Esophagus muscularis mucosa (tissue), 4 donors: ENCODE measurements at regions of chr1 and their contacts with region 1.

Region 1: DNA sequence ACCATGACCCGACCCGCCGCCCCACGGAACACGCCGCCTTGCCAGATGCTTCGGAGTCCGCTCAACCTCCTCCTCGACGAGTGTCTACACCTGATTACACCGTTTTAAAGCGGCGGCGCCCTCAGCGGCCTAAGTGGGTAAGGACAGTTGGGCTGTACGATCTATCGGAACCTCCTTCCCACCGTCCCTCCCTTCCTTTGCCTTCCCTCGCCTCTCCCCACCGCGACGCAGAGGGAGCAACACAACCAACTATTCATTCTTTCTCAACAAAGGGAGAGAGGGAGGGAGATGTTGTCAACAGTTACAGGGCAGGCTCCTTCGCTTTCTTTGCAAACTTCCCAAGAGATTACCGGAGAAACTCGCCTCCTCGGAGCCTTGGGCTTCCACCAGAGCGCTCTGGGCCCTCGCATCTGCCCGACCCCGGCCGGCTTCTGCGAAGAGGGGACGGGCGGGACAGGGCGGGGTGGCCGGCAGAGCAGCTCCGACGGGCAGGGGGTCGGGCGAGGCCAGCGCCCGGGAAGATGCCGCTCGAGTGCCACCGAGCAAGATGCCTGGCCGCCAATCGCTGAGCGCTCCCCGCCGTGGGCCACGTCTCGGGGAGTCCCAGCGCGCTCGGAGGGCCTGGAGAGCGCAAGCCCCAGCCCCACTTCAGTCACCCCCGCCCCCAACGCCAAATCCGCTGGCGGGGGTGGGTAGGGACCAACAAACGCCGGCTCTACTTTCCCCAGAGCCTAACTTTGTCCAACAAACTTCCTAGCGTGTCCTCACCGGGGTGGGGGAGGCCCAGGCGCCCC is 683 bp downstream of the BCAR3 start:
- DNase-seq: peak; percentile 95
- H3K4me3 ChIP-seq: peak overlapping the region; percentile 79 to 94 (median 88)
- H3K27ac ChIP-seq: peak overlapping the region; percentile 86 to 94 (median 92)
- H3K4me1 ChIP-seq: peaks cover 28 to 51% (median 43%) of the 10 kb centered on the region in 4 donors
- H3K27me3 ChIP-seq: no peaks in the 10 kb centered on the region
- CTCF ChIP-seq: peak; percentile 49 to 78 (median 55)
- EP300 ChIP-seq: no peak
- POLR2A ChIP-seq: no peak

Region 2: GRCh38 chr1:93623875-93624274 is 57.1 kb before region 1 on chr1:
- intact Hi-C with region 1: no loop called
- DNase-seq: no peak
- H3K4me3 ChIP-seq: no peak overlapping the region
- H3K27ac ChIP-seq: no peak overlapping the region
- H3K4me1 ChIP-seq: peaks cover 14 to 32% (median 21%) of the 10 kb centered on the region in 4 donors
- H3K27me3 ChIP-seq: no peaks in the 10 kb centered on the region
- CTCF ChIP-seq: no peak
- EP300 ChIP-seq: no peak
- POLR2A ChIP-seq: no peak

Region 3: DNA sequence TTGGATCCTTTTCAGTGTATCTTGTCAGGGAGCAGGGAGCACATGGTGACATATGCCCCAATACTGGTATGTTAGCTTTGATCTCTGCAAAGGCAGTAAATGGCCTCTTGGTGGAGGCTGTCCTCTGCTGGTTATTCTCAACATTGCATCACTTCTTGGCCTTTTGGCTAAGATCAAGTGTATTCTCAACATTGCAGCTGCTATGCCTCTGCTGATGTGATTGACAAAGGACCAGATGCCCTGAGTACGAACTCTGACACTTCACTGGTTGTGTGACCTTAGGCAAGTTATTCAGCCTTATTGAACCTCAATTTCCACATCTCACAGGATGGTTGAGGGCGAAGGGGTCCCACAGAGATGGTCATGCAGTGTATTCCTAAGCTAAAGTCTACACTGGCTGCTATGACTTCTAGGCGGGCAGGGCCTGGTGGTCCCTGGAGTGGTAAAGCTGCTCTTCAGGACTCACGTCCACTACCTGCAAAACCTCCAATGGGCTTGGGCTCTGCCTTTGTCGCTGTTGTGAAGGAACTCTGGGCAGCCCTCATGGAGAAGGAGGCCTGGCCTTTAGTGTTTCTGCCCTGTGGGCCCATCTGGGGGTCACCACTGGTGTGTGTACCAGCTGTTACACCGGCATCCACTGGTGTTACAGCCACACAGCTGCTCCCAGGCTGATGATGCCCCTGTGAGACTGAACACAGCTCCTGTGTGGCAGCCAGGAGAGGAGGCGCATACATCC is 133.3 kb after region 1 on chr1:
- intact Hi-C with region 1: loop called (anchors 5 kb)
- DNase-seq: peak; percentile 60
- H3K4me3 ChIP-seq: no peak overlapping the region
- H3K27ac ChIP-seq: no peak overlapping the region
- H3K4me1 ChIP-seq: peaks cover 8 to 35% (median 15%) of the 10 kb centered on the region in 4 donors
- H3K27me3 ChIP-seq: no peaks in the 10 kb centered on the region
- CTCF ChIP-seq: peak; percentile 92 to 99 (median 93)
- EP300 ChIP-seq: no peak
- POLR2A ChIP-seq: no peak

Region 4: GRCh38 chr1:93827633-93828366 is 146.8 kb after region 1 on chr1:
- intact Hi-C with region 1: no loop called
- DNase-seq: peak; percentile 29
- H3K4me3 ChIP-seq: no peak overlapping the region
- H3K27ac ChIP-seq: no peak overlapping the region
- H3K4me1 ChIP-seq: no peaks in the 10 kb centered on the region
- H3K27me3 ChIP-seq: no peaks in the 10 kb centered on the region
- CTCF ChIP-seq: no peak
- EP300 ChIP-seq: no peak
- POLR2A ChIP-seq: no peak